Activated B cell treated with CpG ODN at 0.5 μM for 24 hours (primary cell): ENCODE measurements at regions of chr1 and their contacts with region 1.

Region 1: DNA sequence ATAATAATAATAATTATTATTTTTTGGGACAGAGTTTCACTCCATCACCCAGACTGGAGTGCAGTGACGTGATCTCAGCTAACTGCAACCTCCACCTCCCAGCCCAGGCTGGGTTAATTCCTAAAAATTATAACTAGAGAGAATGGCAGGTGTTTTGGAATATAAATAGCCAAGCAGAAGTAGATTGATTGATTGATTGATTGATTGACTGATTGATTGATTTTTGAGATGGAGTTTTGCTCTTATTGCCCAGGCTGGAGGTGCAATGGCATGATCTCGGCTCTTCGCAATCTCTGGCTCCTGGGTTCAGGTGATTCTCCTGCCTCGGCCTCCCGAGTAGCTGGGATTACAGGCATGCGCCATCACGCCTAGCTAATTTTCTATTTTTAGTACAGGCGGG is 14.4 kb upstream of the MOV10 start:
- DNase-seq: no peak
- ATAC-seq: no peak
- H3K4me3 Mint-ChIP-seq: no peak overlapping the region
- H3K27ac Mint-ChIP-seq: no peak overlapping the region
- H3K4me1 Mint-ChIP-seq: no peaks in the 10 kb centered on the region
- H3K27me3 Mint-ChIP-seq: no peaks in the 10 kb centered on the region
- CTCF ChIP-seq: no peak

Region 2: DNA sequence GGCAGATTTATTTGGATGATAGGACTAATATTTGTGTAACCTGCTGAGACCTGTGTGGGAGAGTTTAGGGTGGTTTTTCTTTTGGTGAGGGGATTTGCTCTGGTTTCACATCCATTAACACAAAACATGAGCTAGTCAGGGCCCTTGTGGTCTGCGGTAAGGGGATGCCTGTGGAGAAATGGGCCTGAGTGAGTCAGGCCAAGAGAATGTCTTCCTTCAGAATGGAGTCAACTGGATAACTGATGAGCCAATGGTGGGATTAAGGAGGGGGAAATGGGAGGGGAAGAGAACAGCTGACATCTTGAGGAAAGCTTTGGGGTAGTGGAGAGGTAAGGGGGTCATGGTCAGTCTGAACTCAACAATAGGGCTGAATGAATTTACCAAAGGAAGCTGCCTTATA is 137.5 kb before region 1 on chr1:
- CTCF ChIA-PET with region 1: no interaction called
- POLR2A ChIA-PET with region 1: no interaction called
- intact Hi-C with region 1: no loop called
- DNase-seq: no peak
- ATAC-seq: no peak
- H3K4me3 Mint-ChIP-seq: no peak overlapping the region
- H3K27ac Mint-ChIP-seq: no peak overlapping the region
- H3K4me1 Mint-ChIP-seq: no peaks in the 10 kb centered on the region
- H3K27me3 Mint-ChIP-seq: no peaks in the 10 kb centered on the region
- CTCF ChIP-seq: no peak

Region 3: DNA sequence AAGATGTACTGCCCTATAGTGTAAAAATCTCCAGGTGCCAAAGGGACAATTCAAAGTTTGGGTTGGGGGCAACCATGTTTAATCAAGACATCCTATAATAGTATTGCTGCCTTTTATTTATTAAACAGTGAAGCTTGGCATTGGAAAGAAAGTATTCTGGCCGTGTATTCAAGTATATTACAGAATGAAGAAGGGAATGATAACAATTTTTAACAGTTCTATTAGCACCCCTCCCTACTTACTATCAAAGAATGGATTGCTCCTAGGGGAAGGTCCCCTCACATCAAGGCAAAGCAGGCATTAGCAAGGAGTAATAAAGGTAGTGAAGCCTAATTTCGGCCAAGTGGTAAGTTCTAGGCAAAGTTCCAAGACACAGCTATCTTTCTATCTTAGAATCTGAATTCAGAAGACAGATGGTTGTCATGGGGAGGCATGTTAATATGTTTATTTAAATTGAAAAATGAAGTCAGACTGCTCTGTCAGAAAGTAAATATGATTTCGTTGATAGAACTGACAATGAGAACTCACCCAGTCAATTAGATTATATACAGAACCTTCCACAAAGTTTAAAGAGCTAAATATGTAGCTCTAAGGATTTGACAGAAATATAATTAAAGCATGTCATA is 65.7 kb before region 1 on chr1:
- CTCF ChIA-PET with region 1: no interaction called
- POLR2A ChIA-PET with region 1: no interaction called
- intact Hi-C with region 1: no loop called
- DNase-seq: no peak
- ATAC-seq: no peak
- H3K4me3 Mint-ChIP-seq: no peak overlapping the region
- H3K27ac Mint-ChIP-seq: no peak overlapping the region
- H3K4me1 Mint-ChIP-seq: no peaks in the 10 kb centered on the region
- H3K27me3 Mint-ChIP-seq: no peaks in the 10 kb centered on the region
- CTCF ChIP-seq: no peak

Region 4: DNA sequence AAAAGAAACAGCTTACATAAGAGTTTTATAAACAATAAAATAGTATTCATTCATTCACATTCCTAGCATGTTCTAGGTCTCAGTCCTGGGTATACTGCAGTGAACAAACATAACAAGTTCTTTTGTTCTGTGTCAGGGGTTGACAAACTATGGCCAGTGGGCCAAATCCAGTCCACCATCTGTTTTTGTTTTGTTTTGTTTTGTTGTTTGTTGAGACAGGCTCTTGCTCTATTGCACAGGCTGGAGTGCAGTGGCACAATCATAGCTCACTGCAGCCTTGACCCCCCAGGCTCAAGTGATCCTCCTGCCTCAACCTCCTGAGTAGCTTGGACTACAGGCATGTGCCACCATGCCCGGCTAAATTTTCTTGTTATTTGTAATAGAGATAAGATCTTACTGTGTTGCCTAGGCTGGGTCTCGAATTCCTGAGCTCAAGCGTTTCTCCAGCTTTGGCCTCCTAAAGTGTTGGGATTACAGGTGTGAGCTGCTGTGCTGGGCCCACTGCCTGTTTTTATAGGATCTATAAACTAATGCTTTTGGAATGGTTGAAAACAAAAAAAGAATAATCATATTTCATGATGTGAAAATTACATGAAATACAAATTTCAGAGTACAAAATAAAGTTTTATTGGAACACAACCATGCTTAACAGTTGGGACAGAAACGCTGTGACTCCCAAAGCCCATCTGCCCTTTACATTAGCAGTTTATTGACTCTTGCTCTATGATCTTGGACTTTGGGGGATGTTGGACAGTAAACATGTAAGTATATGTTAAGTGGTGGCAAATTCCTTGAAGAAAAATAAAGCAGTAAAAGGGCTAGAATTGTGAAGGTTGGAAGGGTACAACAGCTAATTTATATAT is 22.6 kb before region 1 on chr1:
- CTCF ChIA-PET with region 1: no interaction called
- POLR2A ChIA-PET with region 1: interaction called, 13 read pairs
- intact Hi-C with region 1: no loop called
- DNase-seq: no peak
- ATAC-seq: no peak
- H3K4me3 Mint-ChIP-seq: no peak overlapping the region
- H3K27ac Mint-ChIP-seq: peak overlapping the region; percentile 46
- H3K4me1 Mint-ChIP-seq: peaks cover 55% of the 10 kb centered on the region
- H3K27me3 Mint-ChIP-seq: no peaks in the 10 kb centered on the region
- CTCF ChIP-seq: no peak